H1 (cell line): ENCODE measurements at regions of chr4 and their contacts with region 1.

Region 1: GRCh38 chr4:85747882-85748491 is 273.0 kb downstream of the ARHGAP24 start:
- DNase-seq: no peak
- H3K4me3 ChIP-seq: no peak overlapping the region
- H3K27ac ChIP-seq: no peak overlapping the region
- H3K4me1 ChIP-seq: no peaks in the 10 kb centered on the region
- H3K27me3 ChIP-seq: no peaks in the 10 kb centered on the region
- CTCF ChIP-seq: peak in 2 of 3 experiments; percentile 56 to 79; a peak in 2 of 4 replicates
- EP300 ChIP-seq: no peak
- POLR2A ChIP-seq: no peak
- RAD21 ChIP-seq: peak; percentile 88 to 89

Region 2: DNA sequence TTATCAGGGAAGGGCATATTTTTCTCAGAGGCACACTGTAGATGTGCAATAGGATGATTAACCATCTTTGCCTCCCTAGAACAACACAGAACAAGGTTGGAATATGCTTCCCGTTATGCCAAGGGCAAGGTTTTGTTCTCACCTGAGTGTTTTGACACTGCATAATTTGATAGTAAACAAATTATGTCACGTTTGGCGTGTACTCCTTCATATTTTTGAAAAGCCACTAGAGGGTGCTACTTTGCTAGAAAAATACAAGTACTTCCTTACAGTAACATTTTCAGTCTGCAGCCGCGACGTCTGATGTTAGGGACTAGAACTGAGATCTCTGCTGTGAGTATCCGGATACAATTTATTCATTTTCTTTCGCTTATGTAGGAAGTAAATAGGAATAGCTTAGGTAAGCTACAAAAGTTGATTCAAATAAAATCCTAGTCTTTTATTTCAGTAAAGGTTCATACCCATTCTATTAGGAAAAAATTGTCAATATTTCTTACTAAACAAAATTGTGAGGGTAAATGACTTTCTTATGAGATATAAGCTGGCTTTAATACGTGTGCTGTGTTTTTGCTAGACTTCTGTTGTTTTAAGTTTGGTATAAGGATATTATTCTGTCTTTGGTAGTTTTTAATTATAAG is 600.4 kb before region 1 on chr4:
- CTCF ChIA-PET with region 1: interaction called, 10 read pairs
- POLR2A ChIA-PET with region 1: no interaction called
- DNase-seq: no peak
- H3K4me3 ChIP-seq: no peak overlapping the region
- H3K27ac ChIP-seq: no peak overlapping the region
- H3K4me1 ChIP-seq: no peaks in the 10 kb centered on the region
- H3K27me3 ChIP-seq: no peaks in the 10 kb centered on the region
- CTCF ChIP-seq: peak in 2 of 3 experiments; percentile 47 to 60; a peak in 2 of 4 replicates
- EP300 ChIP-seq: no peak
- POLR2A ChIP-seq: no peak
- RAD21 ChIP-seq: peak; percentile 77 to 79

Region 3: DNA sequence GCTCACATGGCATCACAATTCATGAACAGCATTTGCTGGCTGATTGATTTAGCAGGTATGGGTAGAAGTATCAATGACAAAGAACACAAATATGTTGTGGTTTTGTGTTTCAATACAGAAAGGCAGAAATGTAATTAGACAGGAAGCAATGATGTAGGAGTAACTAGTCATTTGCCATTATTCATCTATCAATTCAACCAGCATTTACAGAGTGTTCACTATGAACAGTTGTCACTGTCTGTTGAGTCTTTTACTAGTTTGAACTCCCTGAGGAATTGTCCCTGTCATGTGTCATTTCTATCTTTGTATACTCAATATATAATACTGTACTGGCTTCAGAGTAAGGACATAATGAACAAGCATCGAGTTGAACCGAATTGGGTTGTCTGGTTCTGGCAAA is 324.6 kb before region 1 on chr4:
- CTCF ChIA-PET with region 1: interaction called, 16 read pairs
- POLR2A ChIA-PET with region 1: no interaction called
- DNase-seq: no peak
- H3K4me3 ChIP-seq: no peak overlapping the region
- H3K27ac ChIP-seq: no peak overlapping the region
- H3K4me1 ChIP-seq: peaks cover 0 to 3% (median 0%) of the 10 kb centered on the region in 4 experiments; a peak in 1 of 7 replicates
- H3K27me3 ChIP-seq: no peaks in the 10 kb centered on the region
- CTCF ChIP-seq: no peak
- EP300 ChIP-seq: no peak
- POLR2A ChIP-seq: no peak
- RAD21 ChIP-seq: no peak

Region 4: GRCh38 chr4:85736571-85736970 is 11.4 kb before region 1 on chr4:
- CTCF ChIA-PET with region 1: interaction called, 14 read pairs
- POLR2A ChIA-PET with region 1: no interaction called
- DNase-seq: no peak
- H3K4me3 ChIP-seq: no peak overlapping the region
- H3K27ac ChIP-seq: no peak overlapping the region
- H3K4me1 ChIP-seq: no peaks in the 10 kb centered on the region
- H3K27me3 ChIP-seq: no peaks in the 10 kb centered on the region
- CTCF ChIP-seq: no peak
- EP300 ChIP-seq: no peak
- POLR2A ChIP-seq: no peak
- RAD21 ChIP-seq: no peak

Region 5: DNA sequence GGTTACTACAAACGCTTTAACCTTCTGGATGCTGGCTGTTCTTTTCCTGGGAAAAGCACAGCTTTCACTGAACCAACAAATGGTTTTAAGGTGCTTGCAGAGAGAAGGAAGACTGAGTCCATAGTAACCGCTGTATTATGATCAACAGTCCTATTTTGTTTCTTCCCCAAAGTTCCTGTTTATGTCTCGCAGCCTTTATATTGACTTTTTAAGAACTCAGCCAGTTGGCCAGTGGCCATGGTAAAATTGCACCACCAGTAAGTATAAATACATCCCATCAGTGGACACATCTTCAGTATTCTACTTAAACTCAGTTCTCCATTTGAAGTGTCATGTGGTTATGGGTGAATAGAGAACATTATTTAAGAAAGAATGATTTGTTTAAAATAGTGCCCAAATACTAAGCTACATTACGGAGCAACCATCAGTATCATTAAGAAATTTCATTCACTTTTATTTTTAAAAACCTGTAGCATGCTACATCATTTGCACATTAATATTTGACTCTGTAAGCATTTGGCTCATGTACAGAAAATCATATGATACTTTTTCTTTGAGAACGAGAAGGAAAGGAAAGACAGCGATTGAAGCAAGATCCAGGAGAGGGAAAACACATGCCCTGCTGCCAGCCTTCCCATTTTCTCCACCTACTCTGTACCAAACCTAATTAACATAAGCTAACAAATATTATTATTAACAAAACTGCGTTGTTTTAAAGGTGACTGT is 14.0 kb after region 1 on chr4:
- CTCF ChIA-PET with region 1: interaction called, 12 read pairs
- POLR2A ChIA-PET with region 1: no interaction called
- DNase-seq: no peak
- H3K4me3 ChIP-seq: no peak overlapping the region
- H3K27ac ChIP-seq: no peak overlapping the region
- H3K4me1 ChIP-seq: 0 out of 7 replicates have a peak, but pooled peaks cover 0 to 4% (median 0%) of the 10 kb centered on the region in 4 experiments
- H3K27me3 ChIP-seq: no peaks in the 10 kb centered on the region
- CTCF ChIP-seq: no peak
- EP300 ChIP-seq: no peak
- POLR2A ChIP-seq: no peak
- RAD21 ChIP-seq: no peak

Region 6: GRCh38 chr4:85842540-85842939 is 94.6 kb after region 1 on chr4:
- CTCF ChIA-PET with region 1: no interaction called
- POLR2A ChIA-PET with region 1: no interaction called
- DNase-seq: no peak
- H3K4me3 ChIP-seq: no peak overlapping the region
- H3K27ac ChIP-seq: no peak overlapping the region
- H3K4me1 ChIP-seq: no peaks in the 10 kb centered on the region
- H3K27me3 ChIP-seq: no peaks in the 10 kb centered on the region
- CTCF ChIP-seq: no peak
- EP300 ChIP-seq: no peak
- POLR2A ChIP-seq: no peak
- RAD21 ChIP-seq: no peak